ENCODE measurements at regions of chr19 and their contacts with region 1.

Region 1: DNA sequence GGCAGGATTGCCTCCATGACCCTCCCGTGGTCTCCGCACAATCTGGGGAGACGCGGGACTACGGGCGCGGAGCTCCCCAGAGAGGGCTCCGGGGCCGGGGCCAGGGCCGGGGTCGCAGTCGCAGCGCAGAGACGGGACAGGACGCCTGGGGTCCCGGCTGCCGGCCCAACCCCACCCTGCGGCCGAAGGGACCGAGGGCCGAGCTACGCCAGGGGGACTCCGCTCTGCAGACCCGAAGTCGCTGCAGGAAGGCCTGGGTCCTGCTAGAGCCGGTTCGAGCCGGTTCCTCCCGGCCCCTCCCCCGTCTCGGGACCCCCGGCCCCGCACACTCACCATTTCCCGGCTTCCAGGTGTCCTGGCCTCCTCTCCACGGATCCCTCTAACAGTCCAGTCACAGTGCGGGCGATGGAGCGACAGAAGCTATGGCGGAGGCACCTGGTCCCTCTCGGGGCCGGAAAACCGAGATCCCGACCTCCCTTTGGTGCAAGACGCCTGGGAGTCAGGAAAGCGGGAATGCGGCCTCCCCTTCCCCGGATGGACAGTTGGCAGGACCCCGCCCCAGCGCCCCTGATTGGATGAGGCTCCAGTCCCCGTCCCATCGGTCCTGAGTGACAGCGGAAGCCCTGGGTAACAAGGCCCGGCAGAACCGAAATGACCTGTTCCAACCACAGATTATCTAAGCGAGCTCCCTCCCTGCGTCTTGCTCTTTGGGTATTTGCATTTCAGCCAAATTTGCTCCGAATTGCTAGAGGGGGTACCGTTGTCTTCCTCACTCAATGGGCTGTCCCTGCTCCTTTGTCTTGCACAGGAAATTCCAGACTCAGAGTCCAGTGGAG is at the start of gene ZNF625:
- DNase-seq: peak in 1 of 2 donors; percentile 92
- H3K4me3 ChIP-seq: peak within 1 kb of the TSS; percentile 69 to 87
- H3K27ac ChIP-seq: peak within 1 kb of the TSS; percentile 74
- H3K4me1 ChIP-seq: peaks cover 26% of the 10 kb centered on the region
- H3K27me3 ChIP-seq: no peaks in the 10 kb centered on the region
- CTCF ChIP-seq: no peak
- POLR2A ChIP-seq: peak in 1 of 2 donors; percentile 13
- total RNA-seq, gene ZNF625: 6.6 TPM

Region 2: DNA sequence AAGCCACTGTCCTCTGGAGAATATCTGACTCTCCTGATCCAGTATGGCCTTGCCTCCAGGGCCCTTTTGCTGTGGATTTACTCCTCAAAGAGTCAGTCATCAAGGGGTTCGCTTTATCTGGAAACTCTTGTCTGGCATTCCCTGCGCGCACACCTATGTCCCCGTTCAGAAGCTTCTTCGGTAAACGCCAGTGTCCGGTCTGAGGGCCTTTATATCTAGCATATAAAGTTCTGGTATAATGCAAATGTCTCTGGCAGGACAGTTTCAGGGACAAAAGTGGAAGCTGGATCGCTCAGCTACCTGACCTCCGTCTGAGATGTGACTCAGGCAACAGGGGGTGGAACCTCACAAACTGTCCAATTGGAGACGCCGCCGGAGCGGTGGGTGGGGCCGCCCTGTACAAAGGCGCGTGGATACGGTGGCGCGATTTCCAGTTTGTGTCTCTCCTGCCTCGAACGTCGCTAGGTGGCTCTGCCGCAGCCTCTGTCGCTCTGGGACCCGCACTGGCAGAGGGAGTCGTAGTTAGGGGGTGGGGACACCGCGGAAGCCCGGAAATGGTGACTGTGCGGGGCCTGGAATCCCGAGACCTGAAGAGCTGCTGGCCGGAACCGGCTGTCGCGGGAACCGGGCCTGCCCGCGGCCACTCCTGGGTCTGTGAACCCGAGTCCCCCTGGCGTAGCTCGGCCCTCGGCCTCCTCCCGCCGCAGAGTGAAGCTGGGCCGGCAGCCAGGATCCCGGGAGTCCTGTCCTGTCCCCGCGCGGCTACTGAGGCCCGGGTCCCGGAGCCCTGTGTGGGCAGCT is 338.8 kb after region 1 on chr19:
- intact Hi-C with region 1: loop called (anchors 5 kb)
- DNase-seq: peak; percentile 92 to 98
- H3K4me3 ChIP-seq: peak overlapping the region; percentile 60 to 68
- H3K27ac ChIP-seq: peak overlapping the region; percentile 93
- H3K4me1 ChIP-seq: peaks cover 14% of the 10 kb centered on the region
- H3K27me3 ChIP-seq: no peaks in the 10 kb centered on the region
- CTCF ChIP-seq: peak in 1 of 3 experiments; percentile 48
- POLR2A ChIP-seq: no peak